ENCODE measurements at regions of chr2 and their contacts with region 1.

Region 1: DNA sequence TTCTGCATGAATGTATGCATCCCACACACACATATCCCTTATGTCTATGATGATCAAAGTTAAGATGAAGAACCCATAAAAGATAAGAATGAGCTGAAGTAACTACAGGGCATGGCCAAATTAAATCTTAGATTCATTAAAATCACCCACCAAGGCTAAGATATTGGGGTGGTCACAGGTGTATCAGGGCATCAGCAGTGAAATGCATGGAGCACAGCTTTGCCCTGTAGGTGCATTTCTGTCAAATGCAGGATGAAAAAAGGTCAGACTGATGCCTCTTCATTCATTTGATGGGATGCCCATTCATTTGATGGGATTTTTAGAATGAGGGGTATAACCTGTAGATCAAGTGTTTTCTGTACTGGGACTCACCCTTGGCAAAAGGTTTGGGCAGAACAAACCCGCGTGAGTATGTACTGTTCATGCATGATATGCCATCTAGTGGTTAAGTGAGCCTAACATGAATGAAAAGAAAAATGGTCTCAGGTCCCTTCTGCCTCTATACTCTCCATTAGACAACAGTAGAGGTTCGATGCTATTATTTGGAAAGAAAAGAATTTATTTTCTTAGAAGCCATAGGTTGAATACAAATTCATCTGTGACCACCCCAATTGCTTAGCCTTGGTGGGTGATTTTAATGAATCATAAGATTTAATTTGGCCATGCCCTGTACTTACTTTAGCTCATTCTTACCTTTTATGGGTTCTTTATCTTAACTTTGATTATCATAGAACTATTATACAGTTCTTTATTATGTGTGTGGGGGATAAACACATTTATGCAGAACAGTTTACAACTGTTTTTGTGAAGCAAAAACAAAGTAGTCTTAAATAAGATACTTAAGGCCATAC is 43.2 kb upstream of the NOSTRIN start:
- DNase-seq: peak in 4 of 9 experiments; percentile 20 to 71 (median 45)
- ATAC-seq: peak; percentile 81
- H3K4me3 ChIP-seq: no peak overlapping the region
- H3K4me3 Mint-ChIP-seq: no peak overlapping the region
- H3K27ac ChIP-seq: no peak overlapping the region
- H3K27ac Mint-ChIP-seq: peak overlapping the region; percentile 1
- H3K4me1 ChIP-seq: peaks cover 36% of the 10 kb centered on the region
- H3K4me1 Mint-ChIP-seq: peaks cover 48% of the 10 kb centered on the region
- H3K27me3 ChIP-seq: no peaks in the 10 kb centered on the region
- H3K27me3 Mint-ChIP-seq: no peaks in the 10 kb centered on the region
- CTCF ChIP-seq: no peak

Region 2: DNA sequence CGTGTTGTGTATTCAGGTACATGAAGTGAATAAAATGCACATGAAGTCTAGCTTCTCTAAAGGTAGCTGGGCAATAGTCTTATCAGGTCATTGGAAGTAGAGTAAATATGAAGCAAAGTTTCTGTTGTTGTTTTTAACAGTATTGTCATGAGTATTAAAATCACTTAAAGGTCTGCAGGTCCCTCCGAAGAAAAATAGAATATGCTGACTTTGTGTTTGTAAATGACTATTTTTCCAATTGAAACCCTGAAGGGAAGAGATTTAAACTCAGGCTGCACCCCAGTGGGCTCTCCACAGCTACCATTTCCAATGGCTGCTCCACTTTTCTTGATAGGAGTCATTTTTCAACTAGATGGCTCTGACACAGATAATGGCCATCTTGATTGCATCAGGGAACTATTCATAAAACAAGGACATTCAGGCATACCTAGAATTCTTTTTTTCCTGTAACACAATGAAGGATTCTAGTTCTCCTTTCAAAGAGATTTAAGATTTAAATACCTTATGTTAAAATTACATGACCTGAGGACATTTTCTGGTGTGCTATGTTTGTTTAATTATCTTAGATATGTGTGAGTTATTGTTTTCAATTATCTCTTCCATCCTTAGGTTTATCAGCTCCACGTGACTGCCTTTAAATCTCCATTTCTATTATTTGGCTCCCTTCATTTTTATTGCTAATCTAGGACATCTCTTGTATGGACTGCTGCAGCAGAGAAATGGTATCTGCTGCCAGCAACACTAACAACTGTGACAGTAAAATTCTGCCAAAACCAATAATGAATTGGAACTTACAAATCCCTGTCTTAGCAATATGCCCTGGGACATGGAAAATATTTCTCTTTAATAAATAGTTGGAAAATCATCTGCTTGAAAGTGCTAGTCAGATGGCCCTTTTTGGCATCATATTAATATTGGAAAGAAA is 105.9 kb before region 1 on chr2:
- CTCF ChIA-PET with region 1: interaction called, 3 read pairs
- POLR2A ChIA-PET with region 1: no interaction called
- intact Hi-C with region 1: loop called in 1 of 2 experiments (anchors 10 kb)
- DNase-seq: no peak
- ATAC-seq: no peak
- H3K4me3 ChIP-seq: no peak overlapping the region
- H3K4me3 Mint-ChIP-seq: no peak overlapping the region
- H3K27ac ChIP-seq: no peak overlapping the region
- H3K27ac Mint-ChIP-seq: no peak overlapping the region
- H3K4me1 ChIP-seq: peaks cover 10% of the 10 kb centered on the region
- H3K4me1 Mint-ChIP-seq: peaks cover 22% of the 10 kb centered on the region
- H3K27me3 ChIP-seq: no peaks in the 10 kb centered on the region
- H3K27me3 Mint-ChIP-seq: no peaks in the 10 kb centered on the region
- CTCF ChIP-seq: no peak

Region 3: GRCh38 chr2:168710754-168711467 is 48.3 kb before region 1 on chr2:
- CTCF ChIA-PET with region 1: interaction called, 4 read pairs
- POLR2A ChIA-PET with region 1: no interaction called
- intact Hi-C with region 1: loop called in 1 of 2 experiments (anchors 2 kb)
- DNase-seq: no peak
- ATAC-seq: no peak
- H3K4me3 ChIP-seq: no peak overlapping the region
- H3K4me3 Mint-ChIP-seq: no peak overlapping the region
- H3K27ac ChIP-seq: no peak overlapping the region
- H3K27ac Mint-ChIP-seq: no peak overlapping the region
- H3K4me1 ChIP-seq: no peaks in the 10 kb centered on the region
- H3K4me1 Mint-ChIP-seq: peaks cover 15% of the 10 kb centered on the region
- H3K27me3 ChIP-seq: no peaks in the 10 kb centered on the region
- H3K27me3 Mint-ChIP-seq: no peaks in the 10 kb centered on the region
- CTCF ChIP-seq: no peak

Region 4: DNA sequence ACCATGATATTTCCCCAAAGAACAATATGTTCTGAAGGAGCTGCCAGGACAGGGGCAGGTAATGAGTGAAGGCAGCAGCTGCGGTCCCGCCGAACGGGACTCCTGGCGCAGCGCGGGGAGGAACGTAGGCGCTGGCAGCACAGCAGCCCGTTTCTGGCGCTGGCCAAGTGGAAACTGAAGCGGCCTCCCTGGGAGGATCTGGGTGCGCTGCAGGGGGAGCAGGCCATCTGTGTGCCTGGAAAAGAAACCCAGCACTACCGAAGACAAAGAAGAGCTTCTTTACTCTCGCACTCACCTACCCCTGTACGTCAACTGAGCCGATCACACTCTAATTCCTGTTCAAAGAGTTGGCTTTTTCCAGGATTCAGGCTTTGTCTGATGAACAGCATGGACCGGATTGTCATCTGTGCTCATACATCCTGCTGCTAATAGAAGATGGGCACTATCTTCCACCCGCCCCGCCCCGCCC is 153.7 kb after region 1 on chr2:
- CTCF ChIA-PET with region 1: no interaction called
- POLR2A ChIA-PET with region 1: no interaction called
- intact Hi-C with region 1: loop called in 1 of 2 experiments (anchors 5 kb)
- DNase-seq: no peak
- ATAC-seq: no peak
- H3K4me3 ChIP-seq: no peak overlapping the region
- H3K4me3 Mint-ChIP-seq: peak overlapping the region; percentile 30
- H3K27ac ChIP-seq: no peak overlapping the region
- H3K27ac Mint-ChIP-seq: no peak overlapping the region
- H3K4me1 ChIP-seq: no peaks in the 10 kb centered on the region
- H3K4me1 Mint-ChIP-seq: peaks cover 8% of the 10 kb centered on the region
- H3K27me3 ChIP-seq: no peaks in the 10 kb centered on the region
- H3K27me3 Mint-ChIP-seq: peaks cover 25% of the 10 kb centered on the region
- CTCF ChIP-seq: no peak

Measured in CD8-positive, alpha-beta T cell (primary cell).